Posterior vena cava (tissue), 2 donors: ENCODE measurements at regions of chr7 and their contacts with region 1.

Region 1: DNA sequence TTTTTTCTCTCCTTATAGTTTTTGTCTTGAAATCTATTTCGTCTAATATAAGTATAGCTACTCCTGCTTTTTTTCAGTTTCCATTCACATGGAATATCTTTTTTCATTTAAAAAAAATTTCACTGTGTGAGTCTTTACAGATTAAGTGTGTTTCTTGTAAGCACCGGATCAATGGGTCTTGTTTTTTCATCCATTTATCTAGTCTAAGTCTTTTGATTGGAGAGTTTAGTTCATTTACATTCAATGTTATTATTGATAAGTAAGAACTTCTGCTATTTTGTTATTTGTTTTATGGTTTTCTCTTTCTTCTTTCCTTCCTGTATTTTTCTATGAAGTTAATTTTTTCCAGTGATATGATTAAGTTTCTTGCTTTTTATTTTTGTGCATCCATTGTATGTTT is 216.7 kb upstream of the CNTNAP2 start:
- DNase-seq: no peak

Region 2: GRCh38 chr7:145915679-145916078 is 15.7 kb after region 1 on chr7:
- intact Hi-C with region 1: loop called in 1 of 2 experiments (anchors 2 kb)
- DNase-seq: no peak

Region 3: GRCh38 chr7:145951566-145951965 is 51.6 kb after region 1 on chr7:
- intact Hi-C with region 1: no loop called
- DNase-seq: no peak